ENCODE measurements at regions of chr13 and their contacts with region 1.

Region 1: GRCh38 chr13:31909864-31910551 is 121.6 kb upstream of the FRY start:
- DNase-seq: peak; percentile 52
- ATAC-seq: no peak
- H3K4me3 Mint-ChIP-seq: no peak overlapping the region
- H3K27ac Mint-ChIP-seq: no peak overlapping the region
- H3K4me1 Mint-ChIP-seq: peaks cover 5% of the 10 kb centered on the region
- H3K27me3 Mint-ChIP-seq: peaks cover 47% of the 10 kb centered on the region

Region 2: DNA sequence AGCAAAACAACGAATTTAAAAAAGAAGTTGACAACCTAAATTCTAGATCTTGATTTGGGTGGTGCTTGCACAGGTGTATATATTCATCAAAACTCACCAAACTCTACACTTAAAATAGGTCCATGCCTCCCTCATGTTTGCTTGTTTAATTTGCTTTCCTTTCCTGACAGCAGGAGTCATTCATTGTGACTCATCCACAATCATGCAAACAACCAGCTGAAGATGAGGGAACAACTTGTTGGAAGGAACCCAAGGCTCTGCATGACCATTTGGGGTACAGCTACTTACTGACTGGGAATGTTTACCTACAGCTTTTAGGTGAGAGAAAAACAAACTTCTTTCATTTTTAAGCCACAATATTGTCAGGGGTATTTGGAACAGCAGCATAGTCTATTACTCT is 74.1 kb before region 1 on chr13:
- CTCF ChIA-PET with region 1: no interaction called
- DNase-seq: no peak
- ATAC-seq: no peak
- H3K4me3 Mint-ChIP-seq: no peak overlapping the region
- H3K27ac Mint-ChIP-seq: no peak overlapping the region
- H3K4me1 Mint-ChIP-seq: no peaks in the 10 kb centered on the region
- H3K27me3 Mint-ChIP-seq: peaks cover 5% of the 10 kb centered on the region

Region 3: DNA sequence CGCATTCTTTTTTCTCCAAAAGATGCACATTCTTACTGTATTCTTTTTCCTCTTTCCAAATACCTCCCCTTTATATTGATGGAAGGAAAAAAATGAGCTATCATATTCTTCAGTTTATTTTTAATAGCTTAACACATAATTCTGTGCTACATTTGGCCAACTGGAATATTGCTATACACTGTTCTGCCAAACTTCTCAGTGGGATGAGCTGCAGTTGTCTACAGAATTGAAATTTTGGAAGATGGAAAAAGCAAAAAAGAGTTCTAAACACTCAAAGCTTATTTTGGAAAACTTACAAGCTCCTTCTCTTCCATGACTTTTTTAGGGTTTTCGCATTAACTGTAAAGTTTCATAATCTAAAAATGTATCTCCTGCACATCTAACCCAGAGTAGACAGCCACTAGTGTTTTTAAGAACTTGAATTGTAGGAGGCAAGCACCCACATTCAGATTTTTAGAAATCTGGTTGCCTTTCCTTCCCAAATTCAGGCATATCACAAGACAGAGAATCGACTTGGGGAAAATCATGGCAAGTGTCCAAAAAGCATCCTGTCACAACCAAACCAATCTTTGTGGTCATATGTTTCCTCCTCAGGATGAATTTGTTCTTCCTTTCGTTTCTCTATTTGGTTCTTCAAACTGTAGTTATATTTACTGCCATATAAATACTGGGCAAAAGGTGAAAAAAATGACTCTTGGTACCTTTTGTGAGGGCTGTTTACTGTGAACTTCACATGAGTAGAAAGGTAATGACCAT is 10.1 kb after region 1 on chr13:
- CTCF ChIA-PET with region 1: interaction called, 18 read pairs
- DNase-seq: no peak
- ATAC-seq: no peak
- H3K4me3 Mint-ChIP-seq: no peak overlapping the region
- H3K27ac Mint-ChIP-seq: no peak overlapping the region
- H3K4me1 Mint-ChIP-seq: peaks cover 9% of the 10 kb centered on the region
- H3K27me3 Mint-ChIP-seq: peaks cover 17% of the 10 kb centered on the region

Region 4: DNA sequence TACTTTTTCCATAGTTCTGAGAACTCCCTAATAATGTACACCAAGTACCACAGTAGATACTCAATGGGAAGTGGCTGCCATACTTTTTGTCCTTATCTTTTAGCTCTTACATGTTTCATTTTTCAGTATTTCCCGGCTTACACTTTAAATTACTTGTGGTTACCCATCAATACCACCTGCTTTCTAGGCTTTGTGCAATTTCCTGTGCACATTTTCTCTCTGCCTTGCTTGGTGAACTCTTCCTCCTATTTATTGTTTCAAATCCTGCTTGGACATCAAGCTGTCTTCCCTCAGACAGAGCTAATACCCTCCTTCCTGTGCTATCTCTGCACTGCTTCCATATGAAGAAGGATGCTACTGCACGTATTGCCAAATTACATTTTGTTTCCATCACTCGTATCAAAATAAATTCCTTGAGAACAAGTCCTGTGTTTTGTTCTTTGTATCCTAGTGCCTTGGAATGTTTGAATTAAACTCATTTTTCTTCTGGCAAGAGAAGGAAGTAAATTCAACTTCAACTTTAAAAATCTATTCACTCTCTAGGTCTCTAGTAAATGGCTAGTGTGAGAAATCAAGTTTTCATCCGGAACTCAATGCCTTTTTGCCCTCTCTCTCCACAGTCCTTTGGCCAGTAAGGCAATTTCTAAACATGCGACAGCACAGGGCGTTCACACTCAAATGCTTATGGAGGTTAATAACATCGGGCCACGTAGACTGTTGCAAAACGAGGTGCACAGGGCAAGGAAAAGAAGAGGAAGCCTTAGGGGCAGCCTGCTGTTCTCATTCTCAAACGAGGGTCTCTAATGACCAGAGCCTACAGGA is 399.5 kb after region 1 on chr13:
- CTCF ChIA-PET with region 1: interaction called, 10 read pairs
- DNase-seq: no peak
- ATAC-seq: peak; percentile 21
- H3K4me3 Mint-ChIP-seq: no peak overlapping the region
- H3K27ac Mint-ChIP-seq: no peak overlapping the region
- H3K4me1 Mint-ChIP-seq: peaks cover 24% of the 10 kb centered on the region
- H3K27me3 Mint-ChIP-seq: peaks cover 2% of the 10 kb centered on the region

Measured in activated CD8-positive, alpha-beta memory T cell treated with anti-CD3 and anti-CD28 coated beads, Interleukin-2, amount 10 ng/mL, durations not matched to agents 7 days and 5 days (primary cell).